Activated T-helper 1 cell treated with anti-CD3 and anti-CD28 coated beads, Interleukin-12 subunit alpha, Interleukin-12 subunit beta, Interleukin-2, Interleukin-4 antibody, amounts not matched to agents 30 ng/mL and 10 ng/mL and 1 ng/mL, durations not matched to agents 14 hours and 24 hours and 36 hours (primary cell): ENCODE measurements at regions of chr1 and their contacts with region 1.

Region 1: DNA sequence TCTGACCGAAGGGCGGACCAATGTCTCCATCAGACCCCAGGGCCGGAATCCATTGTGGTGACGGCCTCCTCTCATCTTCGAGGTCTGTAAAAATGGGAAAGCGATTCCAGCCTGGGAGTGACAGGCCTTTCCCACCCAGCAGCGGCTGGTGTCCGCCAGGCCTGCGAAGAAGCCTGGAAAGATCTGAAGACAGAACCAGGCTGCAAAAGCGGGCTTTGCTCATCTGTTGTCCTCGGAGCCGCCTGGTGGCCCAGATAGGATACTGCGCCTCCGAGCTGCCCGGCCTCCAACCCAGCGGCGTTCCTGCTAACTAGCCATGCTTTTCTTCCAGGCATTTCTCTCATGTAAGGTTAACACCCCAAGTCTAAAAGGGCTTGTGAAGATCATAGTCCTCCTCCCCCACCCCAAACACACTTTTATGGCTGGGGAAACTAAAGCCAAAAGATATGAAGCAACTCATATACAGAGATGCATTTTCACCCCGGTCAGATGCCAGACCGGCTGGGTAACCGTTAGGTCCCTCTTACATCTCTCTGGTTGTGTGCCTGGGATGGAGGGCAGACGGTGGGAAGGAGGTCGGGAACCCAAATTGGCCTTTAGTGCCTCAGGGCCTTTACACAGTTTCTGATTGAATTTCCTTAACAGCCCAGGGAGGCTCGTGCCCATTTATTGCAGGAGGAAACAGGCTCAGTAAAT is 1.9 kb upstream of the DHRS3 start:
- DNase-seq: peak; percentile 69
- H3K4me3 Mint-ChIP-seq: peak overlapping the region; percentile 97
- H3K27ac Mint-ChIP-seq: peak overlapping the region; percentile 69
- H3K4me1 Mint-ChIP-seq: peaks cover 45% of the 10 kb centered on the region
- H3K27me3 Mint-ChIP-seq: no peaks in the 10 kb centered on the region

Region 2: GRCh38 chr1:11805447-11806306 is 814.3 kb before region 1 on chr1 and contains the starts of genes CLCN6 and MTHFR:
- intact Hi-C with region 1: loop called (anchors 5 kb)
- DNase-seq: peak; percentile 99
- H3K4me3 Mint-ChIP-seq: peak within 1 kb of the TSS; percentile 99
- H3K27ac Mint-ChIP-seq: peak within 1 kb of the TSS; percentile 98
- H3K4me1 Mint-ChIP-seq: peaks cover 66% of the 10 kb centered on the region
- H3K27me3 Mint-ChIP-seq: peaks cover 2% of the 10 kb centered on the region
- total RNA-seq, gene CLCN6: 11.2 and 14.3 TPM in 2 replicates
- total RNA-seq, gene MTHFR: 18.1 and 21.4 TPM in 2 replicates

Region 3: GRCh38 chr1:12272770-12273169 is 347.2 kb before region 1 on chr1:
- intact Hi-C with region 1: loop called (anchors 1 kb)
- DNase-seq: no peak
- H3K4me3 Mint-ChIP-seq: no peak overlapping the region
- H3K27ac Mint-ChIP-seq: no peak overlapping the region
- H3K4me1 Mint-ChIP-seq: no peaks in the 10 kb centered on the region
- H3K27me3 Mint-ChIP-seq: no peaks in the 10 kb centered on the region

Region 4: GRCh38 chr1:12344596-12345349 is 275.2 kb before region 1 on chr1:
- intact Hi-C with region 1: loop called (anchors 1 kb)
- DNase-seq: no peak
- H3K4me3 Mint-ChIP-seq: peak overlapping the region; percentile 74
- H3K27ac Mint-ChIP-seq: peak overlapping the region; percentile 70
- H3K4me1 Mint-ChIP-seq: peaks cover 63% of the 10 kb centered on the region
- H3K27me3 Mint-ChIP-seq: no peaks in the 10 kb centered on the region

Region 5: DNA sequence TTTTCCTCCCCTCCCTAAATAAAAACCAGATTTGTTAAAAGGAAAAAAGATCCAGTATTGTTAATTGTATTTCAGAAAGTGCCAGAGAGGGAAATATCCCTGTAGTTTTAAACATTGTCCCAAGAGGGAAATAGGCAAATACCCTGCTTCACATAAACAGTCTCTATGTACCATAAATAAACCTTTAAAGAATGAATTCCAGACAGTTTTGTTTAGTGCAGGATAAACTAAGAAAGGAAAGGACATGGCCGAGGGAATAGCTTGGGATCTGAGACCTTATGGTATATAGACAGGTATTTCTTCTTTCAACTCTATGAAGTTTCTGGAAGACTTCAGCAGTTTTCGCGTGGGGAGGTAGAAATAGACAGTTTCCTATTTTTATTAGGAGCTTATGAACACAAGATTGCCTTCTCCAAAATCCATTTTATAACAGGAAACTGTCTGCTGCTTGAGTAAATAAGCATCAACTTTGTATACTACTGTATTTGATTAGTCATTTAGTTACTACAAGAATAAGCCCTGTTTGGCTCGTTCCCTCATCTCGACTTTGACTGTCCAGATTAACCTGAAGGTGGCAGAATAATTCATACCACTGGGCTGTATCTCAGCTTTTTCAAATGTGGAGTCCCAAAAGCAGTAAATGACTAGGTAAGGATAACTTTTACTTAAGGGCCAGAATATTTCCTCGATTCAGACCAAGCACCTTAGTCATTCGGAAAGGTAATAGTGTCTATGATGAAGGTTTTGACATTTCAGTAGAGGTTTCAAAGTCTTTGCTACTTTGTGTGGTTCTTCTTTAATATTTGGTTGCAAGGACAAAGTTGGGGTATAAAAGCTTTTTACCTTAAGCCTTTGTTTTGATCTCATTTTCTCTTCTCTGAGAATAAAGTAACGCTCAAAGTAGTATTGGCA is 212.6 kb before region 1 on chr1:
- intact Hi-C with region 1: loop called (anchors 1 kb)
- DNase-seq: no peak
- H3K4me3 Mint-ChIP-seq: no peak overlapping the region
- H3K27ac Mint-ChIP-seq: no peak overlapping the region
- H3K4me1 Mint-ChIP-seq: peaks cover 26% of the 10 kb centered on the region
- H3K27me3 Mint-ChIP-seq: no peaks in the 10 kb centered on the region

Region 6: GRCh38 chr1:12472798-12473551 is 147.0 kb before region 1 on chr1:
- intact Hi-C with region 1: loop called (anchors 1 kb)
- DNase-seq: peak; percentile 64
- H3K4me3 Mint-ChIP-seq: peak overlapping the region; percentile 69
- H3K27ac Mint-ChIP-seq: peak overlapping the region; percentile 93
- H3K4me1 Mint-ChIP-seq: peaks cover 82% of the 10 kb centered on the region
- H3K27me3 Mint-ChIP-seq: no peaks in the 10 kb centered on the region

Region 7: GRCh38 chr1:12604114-12604874 is 15.6 kb before region 1 on chr1:
- intact Hi-C with region 1: loop called (anchors 1 kb)
- DNase-seq: peak; percentile 49
- H3K4me3 Mint-ChIP-seq: peak overlapping the region; percentile 47
- H3K27ac Mint-ChIP-seq: peak overlapping the region; percentile 64
- H3K4me1 Mint-ChIP-seq: peaks cover 41% of the 10 kb centered on the region
- H3K27me3 Mint-ChIP-seq: peaks cover 4% of the 10 kb centered on the region

Region 8: GRCh38 chr1:12677565-12677964 is 57.6 kb after region 1 on chr1:
- intact Hi-C with region 1: no loop called
- DNase-seq: no peak
- H3K4me3 Mint-ChIP-seq: no peak overlapping the region
- H3K27ac Mint-ChIP-seq: no peak overlapping the region
- H3K4me1 Mint-ChIP-seq: no peaks in the 10 kb centered on the region
- H3K27me3 Mint-ChIP-seq: peaks cover 11% of the 10 kb centered on the region